Transverse colon (tissue), 4 donors: ENCODE measurements at regions of chr12 and their contacts with region 1.

Region 1: DNA sequence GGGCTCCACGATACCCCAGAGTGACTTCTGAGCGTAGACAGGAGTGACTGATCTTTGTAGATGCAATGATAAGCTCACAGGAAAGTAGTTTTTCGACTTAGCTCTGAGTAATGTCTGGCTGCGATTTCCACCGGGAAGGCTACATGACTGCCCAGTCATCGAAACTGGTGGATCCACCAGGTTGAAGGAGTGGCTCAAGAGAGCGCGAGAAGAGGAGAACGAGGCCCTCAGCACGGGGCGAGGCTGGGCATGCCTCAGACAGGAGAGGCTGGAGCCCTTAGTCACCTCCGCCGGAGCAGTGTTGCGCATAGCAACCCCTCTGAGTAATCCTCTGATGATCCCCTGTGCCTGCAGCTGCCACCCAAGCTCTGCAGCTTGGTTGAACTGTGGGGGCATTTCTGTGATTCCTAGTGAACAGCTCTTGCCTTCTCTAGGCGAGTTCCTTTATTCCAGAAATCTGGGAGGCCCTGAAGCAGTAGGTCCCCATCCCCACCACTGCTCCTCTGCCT is 25.6 kb downstream of the ELK3 start:
- DNase-seq: no peak
- H3K4me3 ChIP-seq: no peak overlapping the region
- H3K27ac ChIP-seq: no peak overlapping the region
- H3K4me1 ChIP-seq: peaks cover 0 to 17% (median 8%) of the 10 kb centered on the region in 4 donors
- H3K27me3 ChIP-seq: no peaks in the 10 kb centered on the region
- CTCF ChIP-seq: no peak
- EP300 ChIP-seq: no peak
- POLR2A ChIP-seq: no peak

Region 2: GRCh38 chr12:95653761-95654546 is 565.8 kb before region 1 on chr12:
- in situ Hi-C with region 1: no loop called
- intact Hi-C with region 1: no loop called
- DNase-seq: no peak
- H3K4me3 ChIP-seq: no peak overlapping the region
- H3K27ac ChIP-seq: no peak overlapping the region
- H3K4me1 ChIP-seq: peaks cover 3 to 33% (median 5%) of the 10 kb centered on the region in 4 donors
- H3K27me3 ChIP-seq: no peaks in the 10 kb centered on the region
- CTCF ChIP-seq: no peak
- EP300 ChIP-seq: no peak
- POLR2A ChIP-seq: no peak

Region 3: GRCh38 chr12:96061864-96062453 is 157.8 kb before region 1 on chr12:
- in situ Hi-C with region 1: loop called in 3 of 4 experiments (anchors 5 to 10 kb)
- intact Hi-C with region 1: loop called (anchors 5 kb)
- DNase-seq: peak; percentile 83
- H3K4me3 ChIP-seq: no peak overlapping the region
- H3K27ac ChIP-seq: no peak overlapping the region
- H3K4me1 ChIP-seq: no peaks in the 10 kb centered on the region
- H3K27me3 ChIP-seq: no peaks in the 10 kb centered on the region
- CTCF ChIP-seq: peak; percentile 79 to 94 (median 89)
- EP300 ChIP-seq: no peak
- POLR2A ChIP-seq: no peak